ENCODE measurements at regions of chr3 and their contacts with region 1.

Region 1: GRCh38 chr3:107927361-107928083 is 163.3 kb downstream of the CD47 start:
- DNase-seq: peak; percentile 62
- H3K4me3 Mint-ChIP-seq: peak overlapping the region; percentile 71
- H3K27ac Mint-ChIP-seq: no peak overlapping the region
- H3K4me1 Mint-ChIP-seq: no peaks in the 10 kb centered on the region
- H3K27me3 Mint-ChIP-seq: no peaks in the 10 kb centered on the region
- CTCF ChIP-seq: peak; percentile 80

Region 2: DNA sequence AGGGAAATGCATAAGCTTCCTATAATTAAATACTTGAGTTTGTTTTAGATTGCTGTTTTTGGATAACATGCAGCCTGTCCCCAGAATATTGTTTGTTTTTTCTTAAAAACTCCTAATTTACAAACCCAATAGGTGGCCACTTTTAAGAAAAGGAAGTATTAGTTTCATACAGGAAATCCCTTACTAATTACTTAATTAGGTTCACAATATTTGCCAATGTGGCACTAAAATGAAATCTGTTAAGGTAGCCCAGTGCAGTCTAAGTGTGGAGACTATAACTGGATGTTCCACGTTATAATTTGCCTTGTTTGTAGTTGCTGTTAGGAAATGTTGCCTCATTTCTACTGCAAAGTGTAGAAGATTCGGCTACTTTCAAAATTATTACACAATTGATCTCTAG is 209.0 kb before region 1 on chr3:
- CTCF ChIA-PET with region 1: no interaction called
- POLR2A ChIA-PET with region 1: no interaction called
- intact Hi-C with region 1: no loop called
- DNase-seq: no peak
- H3K4me3 Mint-ChIP-seq: no peak overlapping the region
- H3K27ac Mint-ChIP-seq: no peak overlapping the region
- H3K4me1 Mint-ChIP-seq: peaks cover 5% of the 10 kb centered on the region
- H3K27me3 Mint-ChIP-seq: no peaks in the 10 kb centered on the region
- CTCF ChIP-seq: no peak

Region 3: DNA sequence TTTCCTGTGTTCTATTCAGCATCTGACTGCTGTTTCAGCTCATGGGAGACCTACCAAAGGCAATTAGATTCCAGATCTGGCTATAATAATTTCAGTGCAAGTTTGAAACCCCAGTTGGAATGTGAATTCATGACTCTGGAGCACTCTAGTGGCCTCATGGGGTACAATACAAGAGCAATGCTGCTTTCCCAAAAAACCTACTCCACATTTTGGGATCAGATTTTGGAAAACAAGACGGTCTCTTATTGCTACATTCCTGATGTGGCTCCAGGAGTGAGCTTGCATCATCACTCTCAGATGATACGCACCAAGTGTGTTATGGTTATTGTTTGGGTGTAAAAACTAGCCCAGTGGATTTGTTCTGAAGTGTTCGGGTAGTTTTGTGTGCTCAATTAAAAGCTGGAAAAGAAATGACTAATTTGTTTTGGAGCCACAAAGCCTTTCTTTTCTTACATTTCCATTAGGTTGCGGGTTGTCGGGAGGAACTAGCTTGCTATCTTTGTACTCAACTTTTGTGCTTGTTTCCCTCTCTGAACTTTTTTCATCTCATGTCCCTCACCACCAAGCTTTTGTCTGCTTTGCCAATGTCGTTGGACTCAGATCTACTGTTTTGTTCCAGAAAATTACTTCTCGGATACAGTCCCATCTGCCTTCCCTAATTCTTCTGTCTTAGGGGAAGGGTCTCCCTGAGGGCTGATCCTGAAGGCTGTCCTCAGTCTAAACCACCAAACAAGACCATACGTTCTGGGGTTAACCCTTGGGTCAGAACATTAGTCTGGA is 132.7 kb before region 1 on chr3:
- CTCF ChIA-PET with region 1: interaction called, 3 read pairs
- POLR2A ChIA-PET with region 1: no interaction called
- intact Hi-C with region 1: loop called (anchors 10 kb)
- DNase-seq: peak; percentile 25
- H3K4me3 Mint-ChIP-seq: no peak overlapping the region
- H3K27ac Mint-ChIP-seq: no peak overlapping the region
- H3K4me1 Mint-ChIP-seq: no peaks in the 10 kb centered on the region
- H3K27me3 Mint-ChIP-seq: no peaks in the 10 kb centered on the region
- CTCF ChIP-seq: peak; percentile 18

Region 4: DNA sequence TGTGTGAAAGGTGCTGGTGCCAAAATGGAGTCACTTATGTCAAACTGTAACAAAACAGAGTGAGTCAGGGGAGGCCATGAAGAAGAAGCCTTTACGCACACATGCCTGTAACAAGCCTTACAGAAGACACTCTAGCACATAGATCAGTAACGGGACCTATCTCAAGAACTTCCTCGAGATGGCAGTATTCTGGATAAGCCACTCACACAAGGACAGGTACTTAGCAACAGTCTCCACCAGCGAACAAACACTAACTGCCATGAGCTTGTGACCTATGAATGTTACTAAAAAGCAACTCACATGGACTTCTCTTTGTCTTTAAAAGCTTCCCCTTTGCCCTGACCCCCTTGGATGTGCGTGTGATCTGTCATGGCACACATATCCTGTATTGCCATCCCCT is 71.8 kb before region 1 on chr3:
- CTCF ChIA-PET with region 1: interaction called, 4 read pairs
- POLR2A ChIA-PET with region 1: no interaction called
- intact Hi-C with region 1: loop called (anchors 10 kb)
- DNase-seq: peak; percentile 53
- H3K4me3 Mint-ChIP-seq: no peak overlapping the region
- H3K27ac Mint-ChIP-seq: no peak overlapping the region
- H3K4me1 Mint-ChIP-seq: no peaks in the 10 kb centered on the region
- H3K27me3 Mint-ChIP-seq: peaks cover 17% of the 10 kb centered on the region
- CTCF ChIP-seq: no peak

Measured in MCF 10A (cell line).